Caco-2 (cell line): ENCODE measurements at regions of chrX and their contacts with region 1.

Region 1: DNA sequence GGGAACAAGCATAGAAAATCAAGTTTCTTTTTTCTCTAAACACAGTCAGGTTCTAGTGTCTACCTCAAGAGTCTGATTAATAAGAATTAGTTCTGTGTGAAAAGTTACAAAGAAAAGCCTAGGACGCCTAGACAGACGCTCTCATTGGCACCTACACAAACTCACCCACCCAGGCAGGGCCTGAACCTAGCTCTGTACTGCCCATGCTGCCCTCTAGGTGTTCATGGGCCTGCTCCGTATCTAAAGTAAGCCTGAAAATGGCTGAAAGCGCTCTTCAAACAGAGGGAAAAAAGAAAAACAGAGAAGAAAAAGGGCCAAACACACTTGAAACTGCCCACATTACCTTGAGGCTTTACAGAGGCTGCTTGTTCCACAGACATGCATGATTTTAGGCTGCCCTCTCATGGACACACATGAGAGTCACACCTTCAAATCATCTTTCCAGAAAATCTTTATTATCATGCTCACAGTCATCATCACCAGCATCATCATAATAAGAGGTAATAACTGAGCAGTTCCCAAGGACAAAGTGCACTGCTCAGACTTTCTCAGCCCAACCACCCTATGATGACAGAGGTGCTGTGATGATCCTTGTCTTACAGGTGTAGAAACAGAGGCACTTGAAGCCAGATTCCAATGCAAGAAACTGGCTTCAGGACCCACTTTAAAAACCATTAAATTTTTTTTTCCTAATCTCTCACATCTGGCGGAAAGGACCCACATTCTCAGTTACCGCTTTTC is 49.6 kb downstream of the MAP7D2 start:
- DNase-seq: peak; percentile 34 to 39
- H3K4me3 ChIP-seq: no peak overlapping the region
- H3K4me3 Mint-ChIP-seq: no peak overlapping the region
- H3K27ac Mint-ChIP-seq: peak overlapping the region; percentile 96
- H3K4me1 ChIP-seq: 0 out of 2 replicates have a peak, but pooled peaks cover 6% of the 10 kb centered on the region
- H3K4me1 Mint-ChIP-seq: peaks cover 13% of the 10 kb centered on the region
- H3K27me3 ChIP-seq: no peaks in the 10 kb centered on the region
- H3K27me3 Mint-ChIP-seq: no peaks in the 10 kb centered on the region
- CTCF ChIP-seq: peak; percentile 51 to 52

Region 2: DNA sequence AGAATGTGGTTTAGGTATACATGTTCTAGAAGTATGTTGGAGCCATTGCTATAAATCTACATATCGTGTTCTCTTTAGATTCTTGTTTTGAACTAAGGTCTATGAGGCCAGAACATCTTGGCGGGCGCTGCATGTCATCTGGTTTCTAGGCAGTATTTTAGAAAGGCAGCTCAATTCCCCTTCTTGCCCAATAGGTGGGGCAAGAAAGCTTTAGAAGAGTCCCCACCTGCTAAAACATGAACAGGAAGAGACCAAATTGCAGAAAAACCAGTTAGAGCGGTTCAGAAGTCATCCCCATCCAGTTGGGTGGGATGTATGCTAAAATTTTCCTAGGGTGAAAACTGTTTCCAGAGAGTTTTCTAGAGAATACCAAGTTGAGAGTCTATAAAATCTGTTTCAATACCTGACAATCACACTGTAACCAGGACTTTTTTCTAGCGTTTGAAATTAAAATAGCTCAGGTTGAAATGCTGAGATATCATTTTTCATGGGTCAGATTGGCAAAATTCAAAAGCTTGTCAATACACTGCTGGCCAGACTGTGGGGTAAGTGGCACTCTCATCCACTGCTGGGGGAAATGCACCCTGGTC is 162.3 kb before region 1 on chrX:
- CTCF ChIA-PET with region 1: interaction called, 3 read pairs
- POLR2A ChIA-PET with region 1: no interaction called
- intact Hi-C with region 1: loop called (anchors 1 kb)
- DNase-seq: peak in 1 of 2 experiments; percentile 55
- H3K4me3 ChIP-seq: no peak overlapping the region
- H3K4me3 Mint-ChIP-seq: no peak overlapping the region
- H3K27ac Mint-ChIP-seq: no peak overlapping the region
- H3K4me1 ChIP-seq: no peaks in the 10 kb centered on the region
- H3K4me1 Mint-ChIP-seq: peaks cover 8% of the 10 kb centered on the region
- H3K27me3 ChIP-seq: no peaks in the 10 kb centered on the region
- H3K27me3 Mint-ChIP-seq: no peaks in the 10 kb centered on the region
- CTCF ChIP-seq: peak; percentile 48 to 76

Region 3: GRCh38 chrX:19990556-19991349 is 76.4 kb before region 1 on chrX and contains the start of gene BCLAF3:
- CTCF ChIA-PET with region 1: no interaction called
- POLR2A ChIA-PET with region 1: no interaction called
- intact Hi-C with region 1: loop called (anchors 2 kb)
- DNase-seq: peak; percentile 86 to 94
- H3K4me3 ChIP-seq: peak within 1 kb of the TSS; percentile 71
- H3K4me3 Mint-ChIP-seq: peak within 1 kb of the TSS; percentile 81
- H3K27ac Mint-ChIP-seq: peak within 1 kb of the TSS; percentile 75
- H3K4me1 ChIP-seq: no peaks in the 10 kb centered on the region
- H3K4me1 Mint-ChIP-seq: peaks cover 13% of the 10 kb centered on the region
- H3K27me3 ChIP-seq: no peaks in the 10 kb centered on the region
- H3K27me3 Mint-ChIP-seq: no peaks in the 10 kb centered on the region
- CTCF ChIP-seq: peak; percentile 61 to 75
- total RNA-seq, gene BCLAF3: 5.7 and 7.8 TPM in 2 replicates

Region 4: GRCh38 chrX:20029728-20030127 is 37.4 kb before region 1 on chrX:
- CTCF ChIA-PET with region 1: interaction called, 3 read pairs
- POLR2A ChIA-PET with region 1: no interaction called
- intact Hi-C with region 1: loop called (anchors 2 kb)
- DNase-seq: peak; percentile 73 to 78
- H3K4me3 ChIP-seq: no peak overlapping the region
- H3K4me3 Mint-ChIP-seq: peak overlapping the region; percentile 35
- H3K27ac Mint-ChIP-seq: peak overlapping the region; percentile 61
- H3K4me1 ChIP-seq: peaks cover 45% of the 10 kb centered on the region
- H3K4me1 Mint-ChIP-seq: peaks cover 7% of the 10 kb centered on the region
- H3K27me3 ChIP-seq: no peaks in the 10 kb centered on the region
- H3K27me3 Mint-ChIP-seq: no peaks in the 10 kb centered on the region
- CTCF ChIP-seq: no peak